Activated CD4-positive, alpha-beta T cell treated with anti-CD3 and anti-CD28 coated beads, Interleukin-2, amount 10 ng/mL, durations not matched to agents 7 days and 5 days (primary cell): ENCODE measurements at regions of chr12 and their contacts with region 1.

Region 1: DNA sequence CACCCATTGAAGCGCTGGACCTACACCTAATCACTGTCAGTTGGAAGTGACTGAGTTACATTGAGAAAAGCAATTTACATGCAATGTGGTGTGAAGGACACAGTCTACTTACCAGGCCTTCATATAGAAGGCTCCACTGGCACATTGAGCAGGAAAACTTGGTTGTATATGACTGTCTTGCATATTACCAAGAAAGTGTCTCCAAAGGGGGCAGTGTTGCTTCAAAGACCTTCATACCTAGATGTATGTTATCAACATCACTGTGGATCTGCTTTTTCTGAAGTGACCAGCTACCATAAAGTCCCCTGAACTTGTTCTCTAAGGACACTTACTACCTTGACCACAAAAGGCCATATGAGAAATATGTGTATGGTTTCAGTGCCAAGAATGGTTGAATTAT is 64.1 kb downstream of the NELL2 start:
- DNase-seq: peak; percentile 73
- H3K4me3 Mint-ChIP-seq: no peak overlapping the region
- H3K27ac Mint-ChIP-seq: no peak overlapping the region
- H3K4me1 Mint-ChIP-seq: peaks cover 33% of the 10 kb centered on the region
- H3K27me3 Mint-ChIP-seq: no peaks in the 10 kb centered on the region

Region 2: GRCh38 chr12:44875954-44876553 is 64.0 kb after region 1 on chr12 and contains the start of gene NELL2:
- CTCF ChIA-PET with region 1: interaction called, 28 read pairs
- POLR2A ChIA-PET with region 1: no interaction called
- DNase-seq: peak; percentile 65
- H3K4me3 Mint-ChIP-seq: peak within 1 kb of the TSS; percentile 86
- H3K27ac Mint-ChIP-seq: peak within 1 kb of the TSS; percentile 65
- H3K4me1 Mint-ChIP-seq: peaks cover 35% of the 10 kb centered on the region
- H3K27me3 Mint-ChIP-seq: peaks cover 21% of the 10 kb centered on the region
- total RNA-seq, gene NELL2: 43.6 to 55.1 TPM

Region 3: DNA sequence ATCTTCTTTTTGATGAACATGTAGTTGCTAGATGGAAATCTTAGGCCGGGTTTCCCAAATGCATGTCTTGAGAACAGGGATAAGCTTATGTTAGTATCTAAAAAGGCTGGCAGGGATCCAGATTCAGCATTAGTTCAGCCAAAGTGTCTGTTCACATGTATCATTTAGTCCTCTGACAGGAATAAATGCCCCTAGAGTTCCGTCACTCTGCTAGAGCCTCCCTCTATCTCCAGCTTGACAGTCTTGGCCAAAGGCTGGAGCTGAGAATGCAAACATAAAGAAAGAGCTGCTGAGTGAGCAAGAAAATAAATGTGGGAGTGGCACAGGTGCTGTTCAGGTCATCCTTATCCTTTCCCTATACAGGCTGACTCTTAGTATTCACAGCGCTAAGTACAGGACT is 77.9 kb after region 1 on chr12:
- CTCF ChIA-PET with region 1: no interaction called
- POLR2A ChIA-PET with region 1: no interaction called
- DNase-seq: no peak
- H3K4me3 Mint-ChIP-seq: no peak overlapping the region
- H3K27ac Mint-ChIP-seq: no peak overlapping the region
- H3K4me1 Mint-ChIP-seq: no peaks in the 10 kb centered on the region
- H3K27me3 Mint-ChIP-seq: peaks cover 3% of the 10 kb centered on the region